Prostate gland (tissue), 2 donors: ENCODE measurements at regions of chr9 and their contacts with region 1.

Region 1: DNA sequence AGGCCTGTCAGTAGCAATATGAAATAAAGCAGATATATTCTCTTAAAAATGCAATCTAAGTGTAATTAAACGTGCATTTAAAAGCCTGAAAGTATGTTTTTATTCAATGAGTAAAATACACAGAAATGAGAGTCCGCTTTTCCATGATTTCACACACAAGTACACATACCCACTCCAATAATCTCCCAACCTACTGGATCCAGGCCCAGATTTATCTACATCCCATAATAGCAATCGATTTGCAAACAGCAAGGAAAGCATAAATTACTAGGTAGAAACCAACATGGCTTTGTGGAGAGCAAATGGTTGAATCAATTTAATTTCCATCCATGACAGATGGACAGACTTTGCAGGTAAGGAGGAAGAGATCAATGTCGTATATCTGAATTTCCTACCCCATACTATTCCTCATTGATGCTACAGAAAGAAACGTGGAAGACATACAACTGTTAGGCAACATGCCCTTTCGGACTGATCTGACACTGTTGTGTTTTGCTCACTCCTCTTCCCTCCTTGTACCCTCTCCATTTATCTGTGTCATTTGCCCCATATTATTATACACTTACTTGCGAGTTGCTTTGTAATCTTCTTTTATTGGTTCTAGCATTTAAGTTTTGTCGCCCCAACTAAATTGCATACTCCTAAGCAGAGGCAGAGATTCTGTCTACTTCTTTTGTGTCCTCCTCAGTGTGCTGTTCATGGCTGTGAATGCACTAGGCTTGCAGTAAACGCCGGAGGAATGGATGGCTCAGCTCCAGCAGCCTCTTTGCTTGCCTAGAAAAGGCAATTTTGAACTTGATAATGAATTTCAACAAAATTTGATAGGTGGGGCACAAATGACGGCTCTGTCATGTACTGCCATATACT is 133.6 kb downstream of the NFIB start:
- DNase-seq: peak; percentile 55
- H3K4me3 ChIP-seq: peak overlapping the region in 1 of 2 donors; percentile 0
- H3K27ac ChIP-seq: peak overlapping the region; percentile 67
- H3K4me1 ChIP-seq: peaks cover 5% of the 10 kb centered on the region
- H3K27me3 ChIP-seq: no peaks in the 10 kb centered on the region
- CTCF ChIP-seq: no peak
- POLR2A ChIP-seq: no peak

Region 2: GRCh38 chr9:14018081-14018480 is 162.2 kb before region 1 on chr9:
- intact Hi-C with region 1: no loop called
- DNase-seq: no peak
- H3K4me3 ChIP-seq: no peak overlapping the region
- H3K27ac ChIP-seq: no peak overlapping the region
- H3K4me1 ChIP-seq: no peaks in the 10 kb centered on the region
- H3K27me3 ChIP-seq: no peaks in the 10 kb centered on the region
- CTCF ChIP-seq: no peak
- POLR2A ChIP-seq: no peak

Region 3: GRCh38 chr9:14245901-14246525 is 65.7 kb after region 1 on chr9:
- intact Hi-C with region 1: loop called (anchors 10 kb)
- DNase-seq: no peak
- H3K4me3 ChIP-seq: no peak overlapping the region
- H3K27ac ChIP-seq: no peak overlapping the region
- H3K4me1 ChIP-seq: peaks cover 5% of the 10 kb centered on the region
- H3K27me3 ChIP-seq: no peaks in the 10 kb centered on the region
- CTCF ChIP-seq: no peak
- POLR2A ChIP-seq: no peak

Region 4: GRCh38 chr9:14428781-14429230 is 248.5 kb after region 1 on chr9:
- intact Hi-C with region 1: no loop called
- DNase-seq: peak; percentile 73
- H3K4me3 ChIP-seq: no peak overlapping the region
- H3K27ac ChIP-seq: no peak overlapping the region
- H3K4me1 ChIP-seq: no peaks in the 10 kb centered on the region
- H3K27me3 ChIP-seq: no peaks in the 10 kb centered on the region
- CTCF ChIP-seq: peak; percentile 61 to 77 (median 64)
- POLR2A ChIP-seq: no peak